A673 (cell line): ENCODE measurements at regions of chr12 and their contacts with region 1.

Region 1: DNA sequence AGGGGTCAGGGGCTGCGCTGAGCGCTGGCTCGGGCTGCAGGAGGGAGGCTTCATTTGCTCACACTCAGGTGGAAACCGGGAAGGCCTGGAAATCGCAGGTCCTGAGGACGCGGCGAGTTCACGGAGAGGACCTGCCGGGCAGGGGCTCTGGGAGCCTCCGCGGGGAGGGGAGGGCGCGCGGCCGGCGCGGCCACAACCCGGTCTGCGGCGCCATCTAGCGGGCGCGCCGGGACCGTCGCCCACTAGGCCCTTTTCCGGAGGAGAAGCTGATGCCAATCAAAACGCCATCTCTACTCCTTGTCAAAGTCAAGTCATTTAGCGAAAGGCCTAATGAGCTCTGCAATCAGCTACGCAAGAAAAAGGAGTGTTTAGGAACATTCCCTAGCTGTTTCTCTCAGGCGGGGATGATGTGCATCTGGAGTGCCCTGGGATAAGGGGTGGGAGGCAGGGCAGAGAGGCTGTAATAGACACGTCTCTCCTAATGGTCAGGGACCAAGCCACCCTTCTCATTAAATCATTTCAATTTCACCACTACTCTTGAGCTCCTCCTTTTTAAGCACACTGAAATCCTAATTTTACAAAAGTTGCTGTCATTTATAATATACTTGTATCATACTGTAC is 885.8 kb upstream of the TMEM132C start:
- DNase-seq: peak; percentile 81
- H3K4me3 ChIP-seq: peak overlapping the region; percentile 42
- H3K27ac ChIP-seq: peak overlapping the region; percentile 26
- H3K4me1 ChIP-seq: peaks cover 3% of the 10 kb centered on the region
- H3K27me3 ChIP-seq: no peaks in the 10 kb centered on the region
- CTCF ChIP-seq: peak; percentile 90

Region 2: DNA sequence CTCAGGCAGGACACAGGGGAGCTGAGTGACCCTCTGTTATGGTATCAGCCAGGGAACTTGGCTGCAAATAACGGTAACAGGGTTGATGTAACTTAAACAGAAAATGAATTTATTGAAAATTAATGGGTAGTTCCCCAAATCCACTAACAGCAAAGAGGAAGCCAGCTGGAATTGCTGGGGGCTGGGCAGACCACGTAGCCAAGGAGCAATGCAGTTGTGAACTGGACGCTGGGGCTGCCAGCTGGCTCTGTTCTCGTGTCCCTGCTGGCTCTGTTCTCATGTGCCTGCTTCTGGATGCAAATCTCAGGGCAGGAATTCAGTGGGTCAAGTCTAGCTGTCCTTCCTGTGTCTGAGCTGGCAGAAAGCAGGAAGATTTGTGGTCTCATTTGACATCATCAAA is 497.5 kb before region 1 on chr12:
- CTCF ChIA-PET with region 1: no interaction called
- POLR2A ChIA-PET with region 1: no interaction called
- intact Hi-C with region 1: loop called (anchors 5 kb)
- DNase-seq: no peak
- H3K4me3 ChIP-seq: no peak overlapping the region
- H3K27ac ChIP-seq: no peak overlapping the region
- H3K4me1 ChIP-seq: no peaks in the 10 kb centered on the region
- H3K27me3 ChIP-seq: no peaks in the 10 kb centered on the region
- CTCF ChIP-seq: no peak

Region 3: DNA sequence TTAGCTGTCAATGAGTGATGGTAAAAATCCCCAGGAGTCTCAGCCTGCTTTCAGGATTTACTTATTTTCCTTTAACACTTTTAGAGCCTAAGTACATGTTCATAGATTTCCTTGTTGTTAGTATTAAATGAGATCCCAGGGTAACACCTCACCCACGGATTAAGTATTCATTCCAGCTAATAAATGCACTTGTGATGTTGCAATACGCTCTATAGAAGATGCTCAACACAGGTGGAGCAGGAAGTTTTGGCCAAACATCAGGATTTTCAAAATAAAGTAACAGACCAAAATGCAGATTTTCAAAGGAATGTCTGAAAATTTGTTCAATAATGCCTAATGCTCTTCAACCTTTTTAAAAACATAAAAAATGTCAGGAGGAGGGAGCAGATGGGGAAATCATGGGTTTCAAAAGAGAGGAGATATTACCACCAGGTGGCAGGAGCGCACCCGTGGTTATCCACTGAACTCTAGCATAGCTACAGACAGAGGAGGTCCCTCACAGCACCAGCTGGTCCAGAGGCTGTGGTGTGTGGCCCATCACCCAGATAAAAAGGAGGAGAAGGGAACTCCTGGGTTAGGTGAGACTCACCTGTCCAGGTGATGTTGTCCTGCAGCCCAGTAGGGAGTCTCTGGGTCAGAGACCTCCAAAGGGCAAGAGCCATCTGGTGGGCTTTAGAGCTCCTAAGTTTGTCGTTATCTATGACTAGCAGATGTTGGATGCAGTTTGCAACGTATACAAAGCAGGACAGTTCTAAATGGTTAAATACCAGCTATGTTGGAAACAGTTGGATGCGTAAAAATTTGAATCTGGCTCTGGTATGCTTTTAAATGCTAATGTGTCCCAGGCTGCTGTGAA is 272.6 kb before region 1 on chr12:
- CTCF ChIA-PET with region 1: interaction called, 6 read pairs
- POLR2A ChIA-PET with region 1: no interaction called
- intact Hi-C with region 1: loop called (anchors 2 kb)
- DNase-seq: peak; percentile 85
- H3K4me3 ChIP-seq: no peak overlapping the region
- H3K27ac ChIP-seq: peak overlapping the region; percentile 38
- H3K4me1 ChIP-seq: peaks cover 11% of the 10 kb centered on the region
- H3K27me3 ChIP-seq: no peaks in the 10 kb centered on the region
- CTCF ChIP-seq: peak; percentile 83

Region 4: DNA sequence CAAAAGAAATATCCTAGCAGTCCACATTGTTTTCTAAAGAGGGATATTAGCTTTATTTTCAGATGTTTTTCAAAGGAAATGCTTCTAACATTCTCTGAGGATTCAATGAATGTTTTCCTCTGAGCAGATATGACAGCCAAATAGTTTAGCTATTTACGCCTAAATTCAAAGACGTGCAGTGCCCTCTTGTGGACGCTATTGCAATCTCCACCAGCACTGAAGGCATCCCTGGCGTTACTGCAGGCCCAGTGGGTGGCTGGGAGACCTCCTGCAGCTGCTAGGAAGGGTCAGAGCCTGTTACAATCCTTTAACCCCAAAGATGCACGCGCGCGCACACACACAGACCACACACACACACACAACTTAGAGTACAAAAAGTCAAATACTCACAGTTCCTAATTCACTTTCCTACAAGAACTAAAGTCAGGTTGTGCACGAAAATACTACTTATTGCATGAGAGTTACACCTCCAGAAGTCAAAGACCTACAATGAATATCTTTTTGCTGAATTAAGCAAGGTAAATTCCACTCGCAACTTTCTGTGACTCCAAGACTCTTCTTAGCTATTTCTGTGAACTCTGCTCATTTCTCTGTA is 296.5 kb after region 1 on chr12:
- CTCF ChIA-PET with region 1: interaction called, 4 read pairs
- POLR2A ChIA-PET with region 1: no interaction called
- intact Hi-C with region 1: loop called (anchors 5 kb)
- DNase-seq: peak; percentile 83
- H3K4me3 ChIP-seq: no peak overlapping the region
- H3K27ac ChIP-seq: no peak overlapping the region
- H3K4me1 ChIP-seq: no peaks in the 10 kb centered on the region
- H3K27me3 ChIP-seq: no peaks in the 10 kb centered on the region
- CTCF ChIP-seq: peak; percentile 91